Activated CD8-positive, alpha-beta memory T cell treated with anti-CD3 and anti-CD28 coated beads, Interleukin-2, amount 10 ng/mL, durations not matched to agents 7 days and 5 days (primary cell): ENCODE measurements at regions of chr9 and their contacts with region 1.

Region 1: GRCh38 chr9:134443168-134444037 is 117.1 kb downstream of the RXRA start:
- DNase-seq: peak; percentile 94
- ATAC-seq: peak; percentile 99
- H3K4me3 Mint-ChIP-seq: no peak overlapping the region
- H3K27ac Mint-ChIP-seq: no peak overlapping the region
- H3K4me1 Mint-ChIP-seq: peaks cover 9% of the 10 kb centered on the region
- H3K27me3 Mint-ChIP-seq: peaks cover 30% of the 10 kb centered on the region

Region 2: GRCh38 chr9:134163353-134164196 is 279.8 kb before region 1 on chr9:
- CTCF ChIA-PET with region 1: interaction called, 50 read pairs
- DNase-seq: peak; percentile 78
- ATAC-seq: peak; percentile 18
- H3K4me3 Mint-ChIP-seq: no peak overlapping the region
- H3K27ac Mint-ChIP-seq: no peak overlapping the region
- H3K4me1 Mint-ChIP-seq: peaks cover 20% of the 10 kb centered on the region
- H3K27me3 Mint-ChIP-seq: no peaks in the 10 kb centered on the region

Region 3: GRCh38 chr9:134364391-134365114 is 78.8 kb before region 1 on chr9:
- CTCF ChIA-PET with region 1: interaction called, 27 read pairs
- DNase-seq: no peak
- ATAC-seq: no peak
- H3K4me3 Mint-ChIP-seq: no peak overlapping the region
- H3K27ac Mint-ChIP-seq: no peak overlapping the region
- H3K4me1 Mint-ChIP-seq: no peaks in the 10 kb centered on the region
- H3K27me3 Mint-ChIP-seq: no peaks in the 10 kb centered on the region

Region 4: GRCh38 chr9:134381671-134382516 is 61.5 kb before region 1 on chr9:
- CTCF ChIA-PET with region 1: interaction called, 13 read pairs
- DNase-seq: peak; percentile 80
- ATAC-seq: peak; percentile 64
- H3K4me3 Mint-ChIP-seq: no peak overlapping the region
- H3K27ac Mint-ChIP-seq: peak overlapping the region; percentile 46
- H3K4me1 Mint-ChIP-seq: peaks cover 19% of the 10 kb centered on the region
- H3K27me3 Mint-ChIP-seq: peaks cover 3% of the 10 kb centered on the region